Activated T-helper 1 cell treated with anti-CD3 and anti-CD28 coated beads, Interleukin-12 subunit alpha, Interleukin-12 subunit beta, Interleukin-2, Interleukin-4 antibody, amounts not matched to agents 30 ng/mL and 10 ng/mL and 1 ng/mL, durations not matched to agents 14 hours and 24 hours and 36 hours (primary cell): ENCODE measurements at regions of chr13 and their contacts with region 1.

Region 1: DNA sequence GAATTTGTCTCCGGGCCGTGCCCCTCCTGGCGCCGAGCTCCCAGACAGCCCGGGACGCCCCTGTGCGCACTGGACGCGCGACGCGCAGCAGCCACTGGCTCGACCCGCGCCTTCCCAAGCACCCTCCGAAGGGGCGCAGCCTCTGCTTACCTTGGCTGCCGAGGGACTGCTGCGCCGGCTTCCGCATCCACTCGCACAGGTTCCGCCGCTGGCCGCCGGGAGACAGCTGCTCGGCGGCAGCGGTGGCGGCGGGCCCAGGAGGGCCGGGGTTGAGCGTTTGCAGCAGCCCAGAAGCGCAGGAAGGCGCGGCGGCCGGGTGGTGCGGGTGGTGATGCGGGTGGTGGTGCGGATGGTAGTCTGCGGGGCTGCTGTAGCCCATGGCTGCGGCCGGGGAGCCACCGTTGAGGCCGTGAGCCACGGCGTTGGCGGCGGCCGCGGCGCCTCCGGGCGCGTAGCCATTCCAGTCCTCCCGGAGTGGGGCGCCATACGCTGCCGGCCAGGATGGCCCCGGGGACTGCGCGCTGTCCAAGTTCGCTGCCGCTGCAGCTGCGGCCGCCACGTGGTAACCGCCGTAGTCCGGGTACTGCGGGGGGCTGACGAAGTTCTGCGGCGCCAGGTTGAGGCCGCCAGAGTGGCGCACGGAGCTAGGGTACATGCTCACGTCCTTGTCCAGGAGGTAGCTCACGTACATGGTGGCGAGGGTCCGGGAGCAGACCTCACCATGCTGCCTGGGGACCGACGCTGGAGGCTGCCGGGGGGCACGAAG is 616 bp downstream of the CDX2 start:
- DNase-seq: no peak
- H3K4me3 Mint-ChIP-seq: no peak overlapping the region
- H3K27ac Mint-ChIP-seq: no peak overlapping the region
- H3K4me1 Mint-ChIP-seq: no peaks in the 10 kb centered on the region
- H3K27me3 Mint-ChIP-seq: peaks cover 72% of the 10 kb centered on the region

Region 2: GRCh38 chr13:27792393-27793218 is 175.9 kb before region 1 on chr13 and contains the start of gene GSX1:
- intact Hi-C with region 1: loop called (anchors 5 kb)
- DNase-seq: peak; percentile 16
- H3K4me3 Mint-ChIP-seq: peak within 1 kb of the TSS; percentile 71
- H3K27ac Mint-ChIP-seq: peak within 1 kb of the TSS; percentile 83
- H3K4me1 Mint-ChIP-seq: peaks cover 23% of the 10 kb centered on the region
- H3K27me3 Mint-ChIP-seq: peaks cover 76% of the 10 kb centered on the region
- total RNA-seq, gene GSX1: not detected in 2 replicates

Region 3: GRCh38 chr13:27839809-27840467 is 128.6 kb before region 1 on chr13:
- intact Hi-C with region 1: no loop called
- DNase-seq: no peak
- H3K4me3 Mint-ChIP-seq: no peak overlapping the region
- H3K27ac Mint-ChIP-seq: no peak overlapping the region
- H3K4me1 Mint-ChIP-seq: no peaks in the 10 kb centered on the region
- H3K27me3 Mint-ChIP-seq: peaks cover 18% of the 10 kb centered on the region